PC-3 (cell line): ENCODE measurements at regions of chr1 and their contacts with region 1.

Region 1: DNA sequence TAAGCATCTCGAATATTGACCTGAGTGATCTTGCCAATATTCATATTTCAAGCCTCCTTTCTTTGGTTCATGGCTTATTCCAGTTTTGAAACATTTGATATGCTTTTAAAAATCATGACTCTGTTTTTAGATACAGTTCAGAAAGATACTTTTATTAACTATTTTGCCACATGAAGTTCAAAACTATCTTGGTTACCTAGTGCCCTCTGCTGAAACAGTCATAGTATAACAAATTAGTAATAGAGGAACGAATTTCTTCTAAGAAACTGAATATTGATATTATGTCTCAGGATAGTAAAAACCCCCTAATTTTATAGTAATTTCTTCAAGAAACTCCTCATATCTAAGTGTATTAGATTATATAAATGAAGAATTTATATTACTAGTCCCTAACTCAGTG is 52.6 kb upstream of the RC3H1 start:
- DNase-seq: peak; percentile 42
- ATAC-seq: no peak; the same call in 1 of the 2 replicates
- H3K4me3 ChIP-seq: no peak overlapping the region
- H3K27ac ChIP-seq: no peak overlapping the region
- H3K4me1 ChIP-seq: no peaks in the 10 kb centered on the region
- H3K27me3 ChIP-seq: no peaks in the 10 kb centered on the region
- CTCF ChIP-seq: peak; percentile 62

Region 2: GRCh38 chr1:173853074-173853473 is 221.7 kb before region 1 on chr1:
- CTCF ChIA-PET with region 1: no interaction called
- POLR2A ChIA-PET with region 1: no interaction called
- intact Hi-C with region 1: loop called (anchors 10 kb)
- DNase-seq: no peak
- ATAC-seq: peak; percentile 64
- H3K4me3 ChIP-seq: no peak overlapping the region
- H3K27ac ChIP-seq: no peak overlapping the region
- H3K4me1 ChIP-seq: no peaks in the 10 kb centered on the region
- H3K27me3 ChIP-seq: no peaks in the 10 kb centered on the region
- CTCF ChIP-seq: no peak

Region 3: GRCh38 chr1:173997796-173998195 is 77.0 kb before region 1 on chr1:
- CTCF ChIA-PET with region 1: no interaction called
- POLR2A ChIA-PET with region 1: no interaction called
- intact Hi-C with region 1: loop called (anchors 5 kb)
- DNase-seq: no peak
- ATAC-seq: no peak
- H3K4me3 ChIP-seq: no peak overlapping the region
- H3K27ac ChIP-seq: no peak overlapping the region
- H3K4me1 ChIP-seq: no peaks in the 10 kb centered on the region
- H3K27me3 ChIP-seq: no peaks in the 10 kb centered on the region
- CTCF ChIP-seq: no peak

Region 4: GRCh38 chr1:174022080-174022975 is 52.4 kb before region 1 on chr1 and contains the start of gene RC3H1:
- CTCF ChIA-PET with region 1: no interaction called
- POLR2A ChIA-PET with region 1: no interaction called
- intact Hi-C with region 1: loop called (anchors 10 kb)
- DNase-seq: peak; percentile 81
- ATAC-seq: peak; percentile 82
- H3K4me3 ChIP-seq: peak within 1 kb of the TSS; percentile 85
- H3K27ac ChIP-seq: peak within 1 kb of the TSS; percentile 59
- H3K4me1 ChIP-seq: peaks cover 27% of the 10 kb centered on the region
- H3K27me3 ChIP-seq: no peaks in the 10 kb centered on the region
- CTCF ChIP-seq: no peak
- total RNA-seq, gene RC3H1: 7.5 and 10.5 TPM in 2 replicates